Common myeloid progenitor, CD34-positive (primary cell): ENCODE measurements at regions of chr7 and their contacts with region 1.

Region 1: DNA sequence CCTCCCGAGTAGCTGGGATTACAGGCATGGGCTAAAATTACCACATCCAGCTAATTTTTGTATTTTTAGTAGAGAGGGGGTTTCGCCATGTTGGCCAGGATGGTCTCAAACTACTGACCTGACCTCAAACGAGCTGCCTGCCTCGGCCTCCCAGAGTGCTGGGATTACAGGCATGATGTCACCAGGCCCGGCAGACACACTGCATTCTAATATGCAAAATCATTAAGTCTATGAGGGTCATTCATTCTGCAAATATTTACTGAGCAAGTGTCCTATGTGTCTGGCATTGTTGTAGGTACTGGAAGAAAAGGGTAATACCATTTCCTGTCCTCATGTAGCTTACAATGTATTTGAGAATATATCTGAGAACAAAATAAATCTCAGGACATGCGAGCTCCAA is 2.7 kb downstream of the PUS7 start:
- DNase-seq: no peak
- H3K4me3 ChIP-seq: no peak overlapping the region
- H3K27ac ChIP-seq: no peak overlapping the region
- H3K4me1 ChIP-seq: peaks cover 3 to 20% (median 13%) of the 10 kb centered on the region in 4 experiments
- H3K27me3 ChIP-seq: no peaks in the 10 kb centered on the region

Region 2: GRCh38 chr7:105531792-105532671 is 12.7 kb after region 1 on chr7 and contains the start of gene RINT1:
- CTCF ChIA-PET with region 1: interaction called, 11 read pairs
- POLR2A ChIA-PET with region 1: no interaction called
- DNase-seq: peak; percentile 93 to 98 (median 96)
- H3K4me3 ChIP-seq: peak within 1 kb of the TSS; percentile 82 to 98 (median 90)
- H3K27ac ChIP-seq: peak within 1 kb of the TSS; percentile 91 to 96
- H3K4me1 ChIP-seq: peaks cover 16 to 22% (median 19%) of the 10 kb centered on the region in 4 experiments
- H3K27me3 ChIP-seq: no peaks in the 10 kb centered on the region

Region 3: GRCh38 chr7:106757846-106758245 is 1238.5 kb after region 1 on chr7:
- CTCF ChIA-PET with region 1: no interaction called
- POLR2A ChIA-PET with region 1: no interaction called
- DNase-seq: peak; percentile 28 to 89 (median 89)
- H3K4me3 ChIP-seq: no peak overlapping the region
- H3K27ac ChIP-seq: no peak overlapping the region
- H3K4me1 ChIP-seq: peaks cover 0 to 11% (median 9%) of the 10 kb centered on the region in 4 experiments
- H3K27me3 ChIP-seq: no peaks in the 10 kb centered on the region